Activated naive CD4-positive, alpha-beta T cell treated with anti-CD3 and anti-CD28 coated beads for 36 hours (primary cell): ENCODE measurements at regions of chr10 and their contacts with region 1.

Region 1: GRCh38 chr10:110311357-110311949 is 6.7 kb upstream of the SMNDC1 start:
- DNase-seq: peak; percentile 61
- H3K4me3 Mint-ChIP-seq: no peak overlapping the region
- H3K27ac Mint-ChIP-seq: no peak overlapping the region
- H3K4me1 Mint-ChIP-seq: peaks cover 28% of the 10 kb centered on the region
- H3K27me3 Mint-ChIP-seq: no peaks in the 10 kb centered on the region

Region 2: GRCh38 chr10:110241841-110242240 is 69.6 kb before region 1 on chr10:
- CTCF ChIA-PET with region 1: no interaction called
- intact Hi-C with region 1: no loop called
- DNase-seq: no peak
- H3K4me3 Mint-ChIP-seq: no peak overlapping the region
- H3K27ac Mint-ChIP-seq: no peak overlapping the region
- H3K4me1 Mint-ChIP-seq: peaks cover 33% of the 10 kb centered on the region
- H3K27me3 Mint-ChIP-seq: peaks cover 4% of the 10 kb centered on the region

Region 3: GRCh38 chr10:110324201-110324804 is 12.8 kb after region 1 on chr10:
- CTCF ChIA-PET with region 1: interaction called, 6 read pairs
- intact Hi-C with region 1: loop called (anchors 2 kb)
- DNase-seq: no peak
- H3K4me3 Mint-ChIP-seq: no peak overlapping the region
- H3K27ac Mint-ChIP-seq: peak overlapping the region; percentile 84
- H3K4me1 Mint-ChIP-seq: peaks cover 37% of the 10 kb centered on the region
- H3K27me3 Mint-ChIP-seq: peaks cover 2% of the 10 kb centered on the region

Region 4: DNA sequence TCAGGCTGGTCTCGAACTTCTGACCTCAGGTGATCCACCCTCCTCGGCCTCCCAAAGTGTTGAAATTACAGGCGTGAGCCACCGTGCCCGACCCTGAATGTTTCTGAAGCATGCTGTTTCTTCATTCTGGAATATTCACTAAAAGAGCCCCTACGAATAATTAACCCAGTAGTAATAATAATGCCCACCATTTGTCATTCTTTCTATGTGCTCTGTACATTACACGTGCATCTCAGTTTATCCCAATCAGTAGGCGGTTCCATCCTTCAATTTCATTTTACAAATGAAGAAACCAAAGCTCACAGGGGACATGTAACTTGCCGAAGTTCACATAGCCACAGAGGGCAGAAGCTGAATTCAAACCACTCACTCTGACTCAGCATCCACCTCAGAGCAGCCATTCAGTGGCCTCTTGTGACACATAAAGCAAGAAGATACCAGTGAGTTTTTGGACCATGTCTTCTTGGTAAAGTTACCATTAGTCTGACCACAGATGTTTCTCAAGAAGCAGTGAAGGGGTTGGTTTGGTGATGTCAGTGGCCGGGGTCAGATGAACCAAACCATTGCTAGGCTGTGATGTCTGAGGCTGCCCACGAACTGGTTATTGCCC is 114.3 kb after region 1 on chr10:
- CTCF ChIA-PET with region 1: no interaction called
- intact Hi-C with region 1: loop called (anchors 5 kb)
- DNase-seq: peak; percentile 68
- H3K4me3 Mint-ChIP-seq: no peak overlapping the region
- H3K27ac Mint-ChIP-seq: peak overlapping the region; percentile 76
- H3K4me1 Mint-ChIP-seq: peaks cover 30% of the 10 kb centered on the region
- H3K27me3 Mint-ChIP-seq: no peaks in the 10 kb centered on the region

Region 5: GRCh38 chr10:110502851-110503301 is 191.4 kb after region 1 on chr10:
- CTCF ChIA-PET with region 1: interaction called, 5 read pairs
- intact Hi-C with region 1: loop called (anchors 1 kb)
- DNase-seq: peak; percentile 66
- H3K4me3 Mint-ChIP-seq: peak overlapping the region; percentile 97
- H3K27ac Mint-ChIP-seq: peak overlapping the region; percentile 85
- H3K4me1 Mint-ChIP-seq: peaks cover 74% of the 10 kb centered on the region
- H3K27me3 Mint-ChIP-seq: no peaks in the 10 kb centered on the region

Region 6: GRCh38 chr10:110547139-110547761 is 235.8 kb after region 1 on chr10:
- CTCF ChIA-PET with region 1: interaction called, 73 read pairs
- intact Hi-C with region 1: loop called (anchors 1 kb)
- DNase-seq: no peak
- H3K4me3 Mint-ChIP-seq: no peak overlapping the region
- H3K27ac Mint-ChIP-seq: no peak overlapping the region
- H3K4me1 Mint-ChIP-seq: peaks cover 6% of the 10 kb centered on the region
- H3K27me3 Mint-ChIP-seq: peaks cover 19% of the 10 kb centered on the region

Region 7: DNA sequence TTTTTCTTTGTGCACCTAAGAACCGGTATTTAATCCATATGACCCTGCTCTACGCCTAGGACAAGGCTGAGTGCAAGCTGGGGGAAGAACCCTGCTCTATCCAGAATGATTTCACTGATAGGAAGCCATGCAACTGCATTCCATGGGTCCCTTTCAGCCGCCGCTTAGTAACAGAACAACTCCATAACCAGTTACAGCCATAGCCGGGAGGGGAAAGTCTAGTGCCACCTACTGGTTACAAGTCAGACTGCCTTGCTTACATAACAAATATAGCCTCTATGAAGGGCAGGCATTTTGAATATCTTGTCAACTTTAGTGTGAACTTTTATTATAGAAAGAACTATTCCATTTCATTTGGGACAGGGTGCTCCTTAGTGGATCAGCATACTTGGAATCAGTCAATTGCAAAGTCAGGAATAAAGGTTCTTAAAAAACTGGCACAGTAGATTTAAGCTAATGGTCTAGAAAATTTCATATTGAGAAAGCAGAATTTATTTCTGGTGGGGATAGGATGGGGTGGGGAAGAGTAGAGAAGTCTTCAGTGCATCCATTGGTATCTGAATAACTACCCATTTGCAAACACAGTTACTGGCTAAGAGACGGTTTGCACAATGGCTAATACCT is 1287.1 kb after region 1 on chr10:
- CTCF ChIA-PET with region 1: no interaction called
- intact Hi-C with region 1: loop called (anchors 5 kb)
- DNase-seq: peak; percentile 70
- H3K4me3 Mint-ChIP-seq: no peak overlapping the region
- H3K27ac Mint-ChIP-seq: no peak overlapping the region
- H3K4me1 Mint-ChIP-seq: no peaks in the 10 kb centered on the region
- H3K27me3 Mint-ChIP-seq: no peaks in the 10 kb centered on the region